Dorsolateral prefrontal cortex (tissue), 120 donors: ENCODE measurements at regions of chr5 and their contacts with region 1.

Region 1: DNA sequence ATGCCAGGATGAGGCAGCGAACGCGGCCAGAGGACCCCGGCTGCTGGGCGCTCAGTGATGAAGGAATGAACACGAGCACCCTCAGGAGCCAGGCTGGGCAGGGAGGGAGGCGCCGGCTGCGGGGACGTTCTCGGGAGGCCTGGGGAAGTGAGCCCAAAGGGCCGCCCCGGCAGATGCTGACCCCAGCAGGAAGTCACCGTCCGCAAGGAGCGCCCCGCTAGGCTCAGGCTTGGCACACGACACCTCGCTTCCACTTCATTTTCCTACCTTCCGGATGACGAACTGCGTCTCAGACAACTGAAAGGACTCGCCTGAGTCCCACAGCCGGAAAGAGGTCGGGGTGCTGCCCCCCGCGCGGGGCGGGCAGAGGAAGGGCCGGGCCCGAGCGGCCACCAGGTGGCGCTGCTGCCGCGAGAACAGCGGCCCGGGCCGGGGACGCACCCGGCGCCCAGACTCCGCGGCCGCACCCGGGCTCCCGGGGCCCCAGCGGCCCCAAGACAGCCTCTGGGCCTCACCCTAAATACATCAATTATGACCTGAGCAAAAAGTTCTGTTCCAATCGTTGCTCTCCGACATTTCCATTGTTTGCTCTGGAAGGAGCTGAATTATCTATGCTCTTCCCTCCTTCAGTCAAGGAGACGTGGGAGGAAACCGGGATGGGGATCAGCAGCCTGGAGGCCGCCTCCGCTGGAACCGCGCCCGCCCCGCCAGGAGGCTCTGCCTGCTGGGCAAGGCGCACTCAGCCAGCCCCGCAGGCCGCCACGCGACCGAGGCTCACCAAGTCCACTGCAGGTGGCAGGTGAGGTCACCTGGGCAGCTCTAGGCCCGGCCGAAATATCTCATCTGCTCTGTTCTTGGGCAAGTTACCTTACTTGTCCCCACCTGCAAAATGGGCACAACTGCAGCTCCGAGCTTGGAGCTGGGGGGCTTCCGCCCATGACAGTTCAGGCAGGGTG is 107.0 kb downstream of the ZNF354C start:
- DNase-seq: peak in 9 of 10 donors; percentile 28 to 76 (median 54)
- H3K4me3 ChIP-seq: peak overlapping the region in 58 of 59 donors; percentile 10 to 65 (median 44)
- H3K27ac ChIP-seq: peak overlapping the region in 5 of 59 donors; percentile 2 to 53 (median 27)
- H3K27me3 ChIP-seq: peaks cover 0 to 3% (median 0%) of the 10 kb centered on the region in 45 donors
- CTCF ChIP-seq: peak; percentile 58 to 100 (median 97)

Region 2: GRCh38 chr5:179123491-179124272 is 43.5 kb before region 1 on chr5:
- intact Hi-C with region 1: no loop called
- DNase-seq: peak in 2 of 10 donors; percentile 21 to 29
- H3K4me3 ChIP-seq: no peak overlapping the region
- H3K27ac ChIP-seq: no peak overlapping the region
- H3K27me3 ChIP-seq: no peaks in the 10 kb centered on the region
- CTCF ChIP-seq: no peak

Region 3: DNA sequence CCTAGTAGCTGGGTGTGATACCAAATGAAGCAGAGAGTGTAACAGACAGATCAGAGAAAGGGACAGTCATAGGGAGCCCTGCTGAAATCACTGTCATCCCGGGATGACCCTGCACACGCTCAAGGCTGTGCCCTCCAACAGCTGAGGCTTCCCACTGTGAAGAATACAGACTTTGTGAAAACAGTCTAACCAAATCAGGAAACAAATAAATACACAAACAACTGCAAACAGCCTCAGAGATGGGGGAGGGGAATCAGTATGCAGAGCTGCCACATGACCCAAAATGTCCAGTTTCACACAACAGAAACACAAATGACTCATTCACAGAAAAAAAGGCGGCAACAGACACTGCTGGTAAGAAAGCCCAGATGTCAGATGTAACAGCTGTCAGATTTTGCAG is 76.2 kb after region 1 on chr5:
- intact Hi-C with region 1: loop called in 1 of 2 experiments (anchors 5 kb)
- DNase-seq: peak in 8 of 10 donors; percentile 40 to 71 (median 60)
- H3K4me3 ChIP-seq: peak overlapping the region in 3 of 59 donors; percentile 9 to 15 (median 12)
- H3K27ac ChIP-seq: peak overlapping the region in 58 of 59 donors; percentile 41 to 95 (median 83)
- H3K27me3 ChIP-seq: no peaks in the 10 kb centered on the region
- CTCF ChIP-seq: peak in 6 of 56 donors; percentile 6 to 27 (median 12)

Region 4: DNA sequence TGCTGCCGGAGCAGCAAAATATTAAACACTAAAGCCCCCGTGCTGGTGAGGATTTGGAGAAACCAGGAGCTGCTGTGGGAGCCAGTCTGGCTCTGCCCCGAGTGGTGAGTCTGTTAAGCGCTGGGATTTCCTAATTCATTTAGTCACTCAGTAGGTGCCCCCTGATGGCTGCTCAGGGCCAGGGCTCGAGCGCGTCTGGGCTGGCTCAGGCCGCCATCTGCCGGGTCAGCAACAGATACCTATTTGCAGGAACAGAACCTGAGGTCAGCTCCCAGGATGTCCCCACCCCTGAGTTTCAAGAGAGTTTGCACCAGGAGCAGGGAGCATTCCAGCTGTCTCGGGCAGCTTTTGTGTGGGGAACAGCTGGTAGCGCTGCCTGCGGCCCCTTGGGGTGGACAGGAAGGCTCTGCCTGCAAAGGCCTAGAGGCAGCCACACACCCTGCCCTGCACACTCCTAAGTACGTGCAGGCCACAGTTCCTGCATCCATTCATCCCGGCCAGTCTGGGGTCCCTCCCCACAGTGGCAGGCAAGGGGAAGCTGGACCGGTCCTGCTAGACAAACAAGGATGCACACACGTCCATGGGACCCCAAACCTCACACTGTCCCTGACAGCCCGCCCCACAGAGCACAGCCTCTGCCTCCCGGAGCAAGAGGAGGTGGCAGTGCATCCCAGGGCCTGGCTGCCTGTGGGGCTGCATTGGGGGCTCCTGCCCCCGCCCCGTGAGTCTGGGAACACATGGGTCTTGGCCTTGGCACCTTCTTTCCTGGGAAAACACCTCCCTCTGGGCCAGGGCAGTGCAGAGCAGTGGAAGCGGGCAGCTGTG is 94.3 kb after region 1 on chr5:
- intact Hi-C with region 1: loop called (anchors 1 to 5 kb)
- DNase-seq: peak in 7 of 10 donors; percentile 24 to 60 (median 51)
- H3K4me3 ChIP-seq: no peak overlapping the region
- H3K27ac ChIP-seq: no peak overlapping the region
- H3K27me3 ChIP-seq: peaks cover 0 to 9% (median 0%) of the 10 kb centered on the region in 45 donors
- CTCF ChIP-seq: peak in 42 of 56 donors; percentile 9 to 59 (median 36)

Region 5: GRCh38 chr5:179345433-179346321 is 178.5 kb after region 1 on chr5 and contains the start of gene ADAMTS2:
- intact Hi-C with region 1: loop called (anchors 5 to 10 kb)
- DNase-seq: peak in 6 of 10 donors; percentile 32 to 68 (median 52)
- H3K4me3 ChIP-seq: peak within 1 kb of the TSS; percentile 33 to 74 (median 60)
- H3K27ac ChIP-seq: peak within 1 kb of the TSS in 3 of 59 donors; percentile 36 to 62 (median 62)
- H3K27me3 ChIP-seq: peaks cover 0 to 38% (median 14%) of the 10 kb centered on the region in 45 donors
- CTCF ChIP-seq: peak in 7 of 56 donors; percentile 9 to 26 (median 14)
- total RNA-seq, gene ADAMTS2: 2.8 to 27.6 (median 9.1) TPM

Region 6: GRCh38 chr5:179355976-179356974 is 189.1 kb after region 1 on chr5:
- intact Hi-C with region 1: no loop called
- DNase-seq: peak in 1 of 10 donors; percentile 23
- H3K4me3 ChIP-seq: no peak overlapping the region
- H3K27ac ChIP-seq: peak overlapping the region in 47 of 59 donors; percentile 2 to 85 (median 56)
- H3K27me3 ChIP-seq: no peaks in the 10 kb centered on the region
- CTCF ChIP-seq: no peak

Region 7: GRCh38 chr5:179495906-179496455 is 328.8 kb after region 1 on chr5:
- intact Hi-C with region 1: loop called (anchors 2 kb)
- DNase-seq: peak in 3 of 10 donors; percentile 10 to 39 (median 21)
- H3K4me3 ChIP-seq: no peak overlapping the region
- H3K27ac ChIP-seq: no peak overlapping the region
- H3K27me3 ChIP-seq: peaks cover 0 to 5% (median 0%) of the 10 kb centered on the region in 45 donors
- CTCF ChIP-seq: peak in 2 of 56 donors; percentile 12 to 13